ENCODE measurements at regions of chr10 and their contacts with region 1.

Region 1: GRCh38 chr10:69716711-69717560 is 84.8 kb upstream of the COL13A1 start:
- DNase-seq: peak; percentile 84
- H3K4me3 ChIP-seq: no peak overlapping the region; a peak in 1 of 4 replicates
- H3K27ac ChIP-seq: no peak overlapping the region
- H3K4me1 ChIP-seq: no peaks in the 10 kb centered on the region; a peak in 1 of 4 replicates
- H3K27me3 ChIP-seq: peaks cover 7% of the 10 kb centered on the region; the same call in 1 of the 2 replicates
- CTCF ChIP-seq: peak; percentile 77
- EP300 ChIP-seq: no peak
- RAD21 ChIP-seq: peak; percentile 93

Region 2: DNA sequence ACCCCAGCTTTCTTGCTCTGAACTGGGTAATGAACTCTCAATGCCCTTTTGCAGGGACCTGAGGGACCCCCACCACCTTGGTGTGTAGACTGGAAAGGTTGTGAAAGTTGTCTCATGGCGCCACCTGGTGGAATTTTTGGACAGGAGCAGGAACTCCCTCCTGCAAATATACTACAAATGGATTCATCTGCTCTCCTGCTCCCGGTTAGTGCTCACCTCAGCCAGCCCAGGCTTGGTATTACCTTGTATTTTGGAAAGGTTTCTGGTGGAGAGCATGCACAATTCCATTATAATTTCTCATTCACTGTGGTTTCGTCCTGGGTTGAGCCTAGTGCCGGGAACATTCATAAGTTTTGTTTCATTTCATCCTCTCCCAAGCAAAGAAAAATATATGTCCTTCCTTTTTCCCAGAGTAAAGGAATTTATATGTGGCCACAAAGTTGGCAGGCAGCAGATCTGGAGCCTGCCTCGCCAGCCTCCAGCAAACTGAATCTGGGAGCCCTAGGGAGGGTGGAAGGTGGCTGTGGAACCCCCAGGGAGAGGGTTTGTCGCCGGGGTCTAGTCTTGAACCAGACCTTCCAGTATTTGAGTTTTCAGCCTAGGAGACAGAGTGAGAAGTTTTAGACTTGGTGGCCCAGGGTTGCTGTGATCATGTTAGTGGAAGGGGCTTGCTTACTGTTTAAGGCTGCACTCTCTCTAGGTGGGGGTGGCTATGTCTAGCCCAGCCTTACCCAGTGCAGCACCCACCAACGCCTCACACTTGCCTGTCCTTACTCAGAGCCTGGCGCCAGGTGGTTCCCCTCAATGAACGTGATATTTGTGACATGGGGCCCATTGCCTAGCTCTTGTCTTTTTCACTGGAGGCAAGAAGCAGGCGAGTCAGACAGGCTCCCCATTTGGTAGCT is 77.4 kb before region 1 on chr10:
- CTCF ChIA-PET with region 1: interaction called, 571 read pairs
- POLR2A ChIA-PET with region 1: no interaction called
- DNase-seq: peak; percentile 81
- H3K4me3 ChIP-seq: peak overlapping the region in 1 of 2 experiments; percentile 48; a peak in 1 of 4 replicates
- H3K27ac ChIP-seq: no peak overlapping the region
- H3K4me1 ChIP-seq: no peaks in the 10 kb centered on the region; a peak in 1 of 4 replicates
- H3K27me3 ChIP-seq: no peaks in the 10 kb centered on the region
- CTCF ChIP-seq: peak; percentile 93
- EP300 ChIP-seq: no peak
- RAD21 ChIP-seq: peak; percentile 90

Region 3: DNA sequence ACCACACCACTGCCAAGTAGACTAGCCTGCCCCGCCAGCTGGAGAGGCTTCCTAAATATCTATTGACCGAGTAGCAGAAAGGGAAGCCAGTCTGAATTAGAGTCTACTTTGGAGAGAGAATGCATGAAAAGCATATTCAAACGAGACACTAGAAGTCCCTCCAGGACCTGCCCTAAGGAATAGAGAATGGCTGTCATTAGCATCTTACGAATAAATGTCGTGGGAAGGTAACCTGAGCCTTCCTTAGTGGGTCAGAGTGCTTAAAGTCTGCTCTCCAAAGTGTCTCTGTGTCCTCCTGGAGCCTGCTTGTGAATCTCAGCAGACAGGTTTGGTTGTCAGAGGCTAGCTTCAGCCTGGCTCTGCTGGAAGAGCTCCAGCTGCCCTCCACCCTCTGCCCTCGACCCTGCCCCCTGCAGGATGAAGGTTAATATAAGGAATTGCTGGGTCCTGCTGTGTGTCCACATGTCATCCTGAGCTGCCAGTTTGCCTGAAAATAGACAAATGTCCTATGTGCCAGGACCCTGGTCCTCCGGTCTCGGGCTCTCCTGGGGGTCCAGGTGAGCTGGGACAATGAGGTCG is 53.5 kb before region 1 on chr10:
- CTCF ChIA-PET with region 1: interaction called, 39 read pairs
- POLR2A ChIA-PET with region 1: no interaction called
- DNase-seq: no peak
- H3K4me3 ChIP-seq: no peak overlapping the region
- H3K27ac ChIP-seq: no peak overlapping the region
- H3K4me1 ChIP-seq: peaks cover 0 to 22% of the 10 kb centered on the region in 2 experiments; a peak in 1 of 4 replicates
- H3K27me3 ChIP-seq: peaks cover 47% of the 10 kb centered on the region
- CTCF ChIP-seq: no peak
- EP300 ChIP-seq: no peak
- RAD21 ChIP-seq: no peak

Region 4: GRCh38 chr10:69696073-69696731 is 20.7 kb before region 1 on chr10:
- CTCF ChIA-PET with region 1: interaction called, 20 read pairs
- POLR2A ChIA-PET with region 1: interaction called, 3 read pairs
- DNase-seq: no peak
- H3K4me3 ChIP-seq: no peak overlapping the region; a peak in 1 of 4 replicates
- H3K27ac ChIP-seq: no peak overlapping the region; a peak in 1 of 4 replicates
- H3K4me1 ChIP-seq: no peaks in the 10 kb centered on the region
- H3K27me3 ChIP-seq: peaks cover 3% of the 10 kb centered on the region; the same call in 1 of the 2 replicates
- CTCF ChIP-seq: peak; percentile 53
- EP300 ChIP-seq: no peak
- RAD21 ChIP-seq: peak; percentile 40

Region 5: GRCh38 chr10:69749178-69750010 is 32.5 kb after region 1 on chr10:
- CTCF ChIA-PET with region 1: interaction called, 11 read pairs
- POLR2A ChIA-PET with region 1: no interaction called
- DNase-seq: no peak
- H3K4me3 ChIP-seq: no peak overlapping the region
- H3K27ac ChIP-seq: peak overlapping the region in 1 of 2 experiments; percentile 28; a peak in 1 of 4 replicates
- H3K4me1 ChIP-seq: peaks cover 5 to 8% of the 10 kb centered on the region in 2 experiments; a peak in 2 of 4 replicates
- H3K27me3 ChIP-seq: peaks cover 4% of the 10 kb centered on the region; the same call in 1 of the 2 replicates
- CTCF ChIP-seq: no peak
- EP300 ChIP-seq: no peak
- RAD21 ChIP-seq: no peak

Measured in SK-N-SH (cell line).